Breast epithelium (tissue), 4 donors: ENCODE measurements at regions of chr2 and their contacts with region 1.

Region 1: DNA sequence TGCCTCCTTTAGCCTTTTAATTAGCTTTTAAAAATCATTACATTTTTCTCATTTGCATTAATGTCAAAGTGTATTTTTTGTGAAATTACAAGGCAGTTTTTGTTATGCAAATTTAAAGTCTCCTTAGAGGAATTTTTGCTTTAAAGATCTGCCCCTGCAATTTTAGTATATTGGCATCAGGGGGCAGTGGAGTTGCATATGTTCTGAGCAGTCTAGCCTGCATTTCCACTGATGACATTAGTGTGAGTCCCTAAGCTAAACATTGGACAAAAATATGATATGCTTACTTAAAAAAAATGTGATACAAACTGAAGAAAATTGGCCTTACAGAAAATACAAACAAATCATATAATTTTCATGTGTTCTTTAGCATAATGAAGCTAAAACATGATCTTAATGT is 426.5 kb downstream of the SLC4A3 start:
- DNase-seq: no peak
- H3K4me3 ChIP-seq: no peak overlapping the region
- H3K27ac ChIP-seq: no peak overlapping the region
- H3K4me1 ChIP-seq: no peaks in the 10 kb centered on the region
- H3K27me3 ChIP-seq: no peaks in the 10 kb centered on the region
- CTCF ChIP-seq: no peak
- POLR2A ChIP-seq: no peak

Region 2: GRCh38 chr2:220779931-220780330 is 726.0 kb after region 1 on chr2:
- intact Hi-C with region 1: loop called (anchors 5 kb)
- DNase-seq: no peak
- H3K4me3 ChIP-seq: no peak overlapping the region
- H3K27ac ChIP-seq: peak overlapping the region; percentile 70 to 76
- H3K4me1 ChIP-seq: no peaks in the 10 kb centered on the region
- H3K27me3 ChIP-seq: no peaks in the 10 kb centered on the region
- CTCF ChIP-seq: no peak
- POLR2A ChIP-seq: no peak